ENCODE measurements at regions of chr2 and their contacts with region 1.

Region 1: DNA sequence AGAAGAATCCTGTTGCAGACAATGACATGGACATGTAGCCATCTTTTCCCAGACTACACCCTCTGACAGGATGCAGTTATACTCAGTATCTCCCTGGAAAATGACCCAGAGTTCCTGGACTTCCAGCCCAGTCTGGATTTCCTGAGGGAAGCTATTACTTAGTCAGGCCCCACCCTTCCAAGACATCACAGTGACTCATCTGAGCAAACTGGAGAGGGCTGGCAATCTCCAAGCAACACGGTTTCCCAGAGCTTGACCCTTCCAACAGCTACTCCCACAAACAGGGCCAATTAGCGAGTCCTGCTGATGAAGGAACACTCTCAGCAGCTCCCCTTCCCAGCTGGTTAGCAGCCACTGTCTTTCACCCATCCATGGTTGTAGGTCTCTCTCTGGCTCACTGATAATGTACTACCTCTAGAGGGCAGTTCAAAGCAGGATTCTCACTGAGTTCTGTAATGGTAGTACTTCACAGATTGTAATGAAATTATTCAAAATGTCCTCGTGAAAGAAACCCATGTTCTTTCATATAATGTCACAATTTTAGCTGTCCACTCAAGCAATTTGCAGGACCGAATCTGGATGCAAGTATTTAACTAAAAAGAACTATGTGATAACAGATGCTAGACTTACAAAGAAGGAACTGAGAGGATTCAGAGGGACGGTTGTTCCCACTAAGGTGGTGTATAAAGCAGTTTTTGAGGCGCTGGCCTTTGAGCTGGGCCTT is 110.2 kb downstream of the MDH1 start:
- DNase-seq: peak; percentile 24
- ATAC-seq: peak; percentile 80
- H3K4me3 Mint-ChIP-seq: no peak overlapping the region
- H3K27ac Mint-ChIP-seq: no peak overlapping the region
- H3K4me1 Mint-ChIP-seq: no peaks in the 10 kb centered on the region
- H3K27me3 Mint-ChIP-seq: peaks cover 2% of the 10 kb centered on the region

Region 2: DNA sequence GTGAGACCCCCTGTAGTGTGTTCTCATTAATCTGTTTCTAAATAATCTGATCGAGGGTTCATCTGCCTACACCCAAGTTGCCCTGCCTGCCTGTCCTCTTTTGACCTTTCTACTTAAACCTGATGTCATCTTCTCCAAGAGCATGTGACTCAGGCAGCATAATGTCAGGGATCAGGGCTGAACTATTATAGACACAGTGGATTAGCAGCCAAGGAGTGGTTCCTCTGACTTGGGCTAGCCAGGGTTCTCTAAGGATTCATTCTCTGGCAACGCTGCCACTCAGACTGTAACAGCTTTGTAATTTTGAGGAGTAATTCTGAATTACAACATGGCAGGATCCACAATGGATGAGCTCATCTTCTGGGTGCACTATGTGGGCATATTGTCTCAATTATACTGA is 13.8 kb after region 1 on chr2:
- CTCF ChIA-PET with region 1: interaction called, 10 read pairs
- POLR2A ChIA-PET with region 1: no interaction called
- DNase-seq: no peak
- ATAC-seq: no peak
- H3K4me3 Mint-ChIP-seq: no peak overlapping the region
- H3K27ac Mint-ChIP-seq: no peak overlapping the region
- H3K4me1 Mint-ChIP-seq: no peaks in the 10 kb centered on the region
- H3K27me3 Mint-ChIP-seq: peaks cover 4% of the 10 kb centered on the region

Region 3: DNA sequence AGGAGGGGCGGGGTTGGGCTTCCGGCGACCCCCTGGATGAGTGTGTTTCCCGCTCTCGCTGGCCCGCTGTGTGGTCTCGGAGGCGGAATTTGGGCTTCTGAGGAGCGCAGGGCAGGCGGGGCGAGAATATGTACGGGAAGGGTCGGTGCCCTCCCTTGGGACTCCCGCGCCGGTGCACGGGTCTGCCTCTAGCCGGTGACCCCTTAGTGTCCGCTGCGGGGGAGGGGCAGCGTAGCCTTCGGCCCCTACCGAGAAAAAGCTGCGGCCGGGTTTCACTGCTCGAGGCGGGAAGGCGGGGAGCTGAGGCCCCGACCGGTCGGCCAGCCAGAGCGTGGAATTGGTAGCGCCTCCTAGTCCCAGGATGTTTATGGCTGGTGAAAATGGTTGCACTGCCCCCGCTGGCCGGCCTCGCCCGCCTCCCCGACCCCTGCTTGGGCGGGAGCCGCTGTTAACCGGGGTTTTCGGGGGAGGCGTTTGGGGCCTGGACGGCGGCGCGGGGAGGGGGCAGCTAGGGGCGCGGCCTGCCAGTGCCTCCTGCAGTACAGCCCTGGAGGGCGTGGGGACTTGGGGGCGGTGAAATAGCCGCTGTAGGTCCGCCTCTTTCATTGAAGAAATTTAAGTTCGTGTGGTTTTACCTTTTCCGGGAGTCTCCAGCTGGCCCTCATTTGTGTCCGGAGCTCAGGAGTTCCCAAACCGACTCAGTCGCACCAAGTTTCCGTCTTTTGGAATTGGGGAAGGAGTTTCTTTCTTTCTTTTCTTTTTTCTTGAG is 142.5 kb after region 1 on chr2 and contains the start of gene UGP2:
- CTCF ChIA-PET with region 1: interaction called, 10 read pairs
- POLR2A ChIA-PET with region 1: no interaction called
- DNase-seq: peak; percentile 94
- ATAC-seq: peak; percentile 76
- H3K4me3 Mint-ChIP-seq: peak within 1 kb of the TSS; percentile 98
- H3K27ac Mint-ChIP-seq: peak within 1 kb of the TSS; percentile 99
- H3K4me1 Mint-ChIP-seq: peaks cover 55% of the 10 kb centered on the region
- H3K27me3 Mint-ChIP-seq: peaks cover 2% of the 10 kb centered on the region
- total RNA-seq, gene UGP2: 161 to 164 TPM

Region 4: GRCh38 chr2:63856303-63856603 is 157.3 kb after region 1 on chr2:
- CTCF ChIA-PET with region 1: interaction called, 61 read pairs
- POLR2A ChIA-PET with region 1: no interaction called
- DNase-seq: peak; percentile 79
- ATAC-seq: peak; percentile 89
- H3K4me3 Mint-ChIP-seq: peak overlapping the region; percentile 72
- H3K27ac Mint-ChIP-seq: peak overlapping the region; percentile 96
- H3K4me1 Mint-ChIP-seq: peaks cover 74% of the 10 kb centered on the region
- H3K27me3 Mint-ChIP-seq: no peaks in the 10 kb centered on the region